Body of pancreas (tissue), 4 donors: ENCODE measurements at regions of chr19 and their contacts with region 1.

Region 1: GRCh38 chr19:7674010-7675005 is 2.6 kb upstream of the MCEMP1 start:
- DNase-seq: peak; percentile 39 to 73 (median 52)
- ATAC-seq: peak; percentile 69
- H3K4me3 ChIP-seq: no peak overlapping the region
- H3K27ac ChIP-seq: no peak overlapping the region
- H3K4me1 ChIP-seq: no peaks in the 10 kb centered on the region
- H3K27me3 ChIP-seq: no peaks in the 10 kb centered on the region
- CTCF ChIP-seq: no peak
- POLR2A ChIP-seq: no peak

Region 2: DNA sequence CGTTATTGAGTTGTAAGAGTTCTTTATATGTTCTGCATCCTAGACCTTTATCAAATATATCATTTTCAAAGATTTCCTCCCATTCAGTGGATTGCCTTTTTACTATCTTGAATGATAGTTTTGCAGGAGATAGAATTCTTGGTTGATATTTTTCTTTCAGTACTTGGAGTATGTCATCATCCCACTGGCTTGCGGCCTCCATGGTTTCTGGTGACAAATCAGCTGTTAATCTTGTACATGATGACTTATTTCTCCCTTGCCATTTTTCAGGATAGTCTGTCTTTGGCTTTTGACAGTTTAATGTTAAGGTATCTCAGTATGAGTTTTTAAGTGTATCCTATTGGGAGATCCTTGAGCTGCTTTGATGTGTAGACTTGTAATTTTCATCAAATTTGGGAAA is 596.3 kb before region 1 on chr19:
- intact Hi-C with region 1: no loop called
- DNase-seq: no peak
- ATAC-seq: no peak
- H3K4me3 ChIP-seq: no peak overlapping the region
- H3K27ac ChIP-seq: no peak overlapping the region
- H3K4me1 ChIP-seq: no peaks in the 10 kb centered on the region
- H3K27me3 ChIP-seq: no peaks in the 10 kb centered on the region
- CTCF ChIP-seq: no peak
- POLR2A ChIP-seq: no peak

Region 3: DNA sequence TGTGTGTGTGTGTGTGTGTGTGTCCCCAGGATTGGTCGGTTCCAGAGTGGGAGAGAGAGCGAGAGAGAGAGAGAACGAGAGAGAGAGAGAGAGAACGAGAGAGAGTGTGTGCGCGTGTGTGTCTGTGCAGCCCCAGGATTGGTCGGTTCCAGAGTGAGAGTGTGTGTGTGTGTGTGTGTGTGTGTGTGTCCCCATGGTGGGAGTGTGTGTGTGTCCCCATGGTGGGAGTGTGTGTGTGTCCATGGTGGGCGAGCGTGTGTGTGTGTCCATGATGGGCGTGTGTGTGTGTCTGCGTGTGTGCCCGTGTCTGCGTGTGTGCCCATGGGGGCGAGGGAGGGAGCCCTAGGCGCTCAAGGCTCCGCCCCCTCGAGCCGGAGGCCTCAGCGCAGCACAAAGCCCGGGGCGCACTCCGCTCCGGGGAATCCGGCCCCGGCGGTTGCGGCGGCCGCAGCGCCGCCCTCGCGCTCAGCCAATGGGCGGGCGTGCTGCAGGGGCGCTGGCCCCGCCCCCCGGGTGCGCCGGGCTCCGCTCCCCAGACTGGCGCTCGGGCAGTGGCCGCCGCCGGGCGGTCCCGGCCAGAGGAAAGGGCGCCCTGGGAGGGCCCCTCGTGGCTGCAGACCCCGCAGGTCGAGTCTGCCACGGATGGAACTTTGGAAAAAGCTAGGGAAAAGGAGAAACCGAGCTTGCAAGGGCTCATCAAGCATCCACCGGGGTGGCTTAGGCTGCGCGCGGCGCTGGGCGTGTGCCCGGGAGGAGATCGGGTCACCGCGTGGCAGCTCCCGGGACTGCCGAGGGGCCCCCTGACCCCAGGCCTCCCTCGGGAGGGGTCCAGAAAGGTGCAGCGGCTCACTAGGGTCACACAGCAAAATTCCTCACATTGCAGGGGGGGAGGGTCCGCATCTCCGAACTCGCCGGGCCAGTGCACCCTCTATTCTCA is 476.3 kb before region 1 on chr19:
- intact Hi-C with region 1: no loop called
- DNase-seq: peak; percentile 93 to 95 (median 94)
- ATAC-seq: peak; percentile 85
- H3K4me3 ChIP-seq: peak overlapping the region; percentile 14 to 62
- H3K27ac ChIP-seq: peak overlapping the region; percentile 87 to 96 (median 92)
- H3K4me1 ChIP-seq: peaks cover 87% of the 10 kb centered on the region
- H3K27me3 ChIP-seq: no peaks in the 10 kb centered on the region
- CTCF ChIP-seq: peak in 4 of 7 experiments; percentile 10 to 58 (median 44)
- POLR2A ChIP-seq: peak; percentile 91 to 94 (median 92)

Region 4: GRCh38 chr19:7562646-7563393 is 111.5 kb before region 1 on chr19:
- intact Hi-C with region 1: loop called (anchors 5 kb)
- DNase-seq: peak in 2 of 4 donors; percentile 15 to 27
- ATAC-seq: no peak
- H3K4me3 ChIP-seq: no peak overlapping the region
- H3K27ac ChIP-seq: no peak overlapping the region
- H3K4me1 ChIP-seq: no peaks in the 10 kb centered on the region
- H3K27me3 ChIP-seq: no peaks in the 10 kb centered on the region
- CTCF ChIP-seq: no peak
- POLR2A ChIP-seq: no peak

Region 5: DNA sequence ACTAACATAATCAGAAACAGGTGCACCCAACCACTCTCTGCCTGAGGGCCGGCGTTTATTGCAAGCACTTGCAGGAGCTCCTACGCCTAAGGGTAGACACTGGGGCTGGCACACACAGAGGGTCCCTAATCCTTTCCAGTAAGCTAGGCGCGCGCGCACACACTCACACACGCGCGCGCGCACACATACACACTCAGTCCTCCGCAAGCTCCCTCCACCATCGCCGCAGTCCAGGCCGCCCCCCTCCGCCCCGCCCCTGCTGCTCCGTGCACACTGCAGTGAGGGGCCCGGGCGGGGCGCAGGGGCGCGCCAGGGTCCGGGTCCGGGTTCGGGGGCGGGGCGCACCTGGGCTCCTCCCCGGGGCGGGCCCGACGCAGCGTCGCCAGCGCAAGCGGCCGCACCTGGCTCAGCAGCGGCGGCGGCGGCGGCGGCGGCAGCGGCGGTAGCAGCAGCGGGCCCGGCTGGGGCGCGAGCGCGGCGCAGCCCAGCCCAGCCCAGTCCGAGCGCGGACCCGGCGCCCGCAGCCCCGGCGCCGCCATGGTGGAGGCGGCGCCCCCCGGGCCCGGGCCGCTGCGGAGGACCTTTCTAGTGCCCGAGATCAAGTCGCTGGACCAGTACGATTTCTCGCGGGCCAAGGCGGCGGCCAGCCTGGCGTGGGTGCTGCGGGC is 78.7 kb before region 1 on chr19 and contains the start of gene CAMSAP3:
- intact Hi-C with region 1: no loop called
- DNase-seq: peak; percentile 61 to 70 (median 63)
- ATAC-seq: peak; percentile 90
- H3K4me3 ChIP-seq: peak within 1 kb of the TSS in 1 of 2 donors; percentile 48
- H3K27ac ChIP-seq: peak within 1 kb of the TSS; percentile 52 to 81 (median 64)
- H3K4me1 ChIP-seq: peaks cover 24% of the 10 kb centered on the region
- H3K27me3 ChIP-seq: no peaks in the 10 kb centered on the region
- CTCF ChIP-seq: peak in 1 of 7 experiments; percentile 15
- POLR2A ChIP-seq: no peak
- total RNA-seq, gene CAMSAP3: 21.8 to 32.3 TPM